ENCODE measurements at regions of chr1 and their contacts with region 1.

Region 1: GRCh38 chr1:39196244-39197215 is 8.0 kb upstream of the MACF1 start:
- DNase-seq: peak; percentile 31 to 94 (median 61)
- ATAC-seq: peak; percentile 66
- H3K4me3 ChIP-seq: peak overlapping the region; percentile 2
- H3K4me3 Mint-ChIP-seq: peak overlapping the region; percentile 77
- H3K27ac ChIP-seq: peak overlapping the region; percentile 81 to 85
- H3K27ac Mint-ChIP-seq: peak overlapping the region; percentile 93
- H3K4me1 ChIP-seq: peaks cover 68% of the 10 kb centered on the region
- H3K4me1 Mint-ChIP-seq: peaks cover 82% of the 10 kb centered on the region
- H3K27me3 ChIP-seq: no peaks in the 10 kb centered on the region
- H3K27me3 Mint-ChIP-seq: no peaks in the 10 kb centered on the region
- CTCF ChIP-seq: no peak

Region 2: GRCh38 chr1:38789498-38790169 is 406.9 kb before region 1 on chr1:
- CTCF ChIA-PET with region 1: no interaction called
- POLR2A ChIA-PET with region 1: no interaction called
- intact Hi-C with region 1: no loop called
- DNase-seq: no peak
- ATAC-seq: no peak
- H3K4me3 ChIP-seq: no peak overlapping the region
- H3K4me3 Mint-ChIP-seq: no peak overlapping the region
- H3K27ac ChIP-seq: no peak overlapping the region
- H3K27ac Mint-ChIP-seq: no peak overlapping the region
- H3K4me1 ChIP-seq: no peaks in the 10 kb centered on the region
- H3K4me1 Mint-ChIP-seq: no peaks in the 10 kb centered on the region
- H3K27me3 ChIP-seq: peaks cover 32 to 51% of the 10 kb centered on the region in 2 experiments
- H3K27me3 Mint-ChIP-seq: peaks cover 92% of the 10 kb centered on the region
- CTCF ChIP-seq: no peak

Region 3: DNA sequence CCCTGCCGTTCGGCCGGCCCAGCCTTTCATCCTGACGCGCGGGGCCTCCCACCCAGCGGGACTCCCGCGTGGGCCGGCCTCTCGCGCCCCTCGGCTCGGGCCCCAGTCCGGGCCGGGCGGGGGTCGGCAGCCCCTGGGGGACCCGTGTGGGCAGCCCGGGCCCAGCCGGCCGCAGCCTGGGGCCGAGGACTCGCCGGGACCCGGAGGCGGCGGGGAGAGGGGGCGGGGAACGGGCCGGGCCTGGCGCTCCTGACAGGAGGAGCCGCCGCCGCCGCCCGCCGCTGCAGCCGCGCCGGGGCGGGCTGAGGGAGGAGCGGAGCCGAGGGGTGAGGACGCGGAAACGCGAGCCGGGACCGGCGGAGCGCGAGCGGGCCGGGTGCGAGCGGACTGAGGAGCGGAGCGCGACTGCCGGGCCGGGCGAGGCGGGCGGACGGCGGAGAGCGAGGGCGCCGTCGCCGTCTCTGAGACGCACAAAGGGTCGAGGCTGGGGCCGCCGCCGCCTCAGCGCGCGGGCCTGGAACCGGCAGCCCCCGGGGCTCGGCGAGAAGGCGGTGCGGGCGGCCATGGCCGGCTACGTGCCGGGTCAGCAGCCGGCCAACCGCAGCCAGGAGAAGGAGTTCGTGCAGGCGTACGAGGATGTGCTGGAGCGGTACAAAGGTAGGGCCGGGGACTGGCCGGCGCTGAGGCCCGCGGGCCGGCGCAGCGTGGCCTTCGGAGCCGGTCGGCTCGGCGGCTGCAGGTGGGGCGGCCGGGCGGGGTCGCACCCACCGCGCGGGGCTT is 91.3 kb before region 1 on chr1:
- CTCF ChIA-PET with region 1: interaction called, 14 read pairs
- POLR2A ChIA-PET with region 1: interaction called, 4 read pairs
- intact Hi-C with region 1: loop called (anchors 1 to 2 kb)
- DNase-seq: peak; percentile 31 to 81 (median 60)
- ATAC-seq: peak; percentile 84
- H3K4me3 ChIP-seq: peak overlapping the region; percentile 70
- H3K4me3 Mint-ChIP-seq: peak overlapping the region; percentile 72
- H3K27ac ChIP-seq: no peak overlapping the region
- H3K27ac Mint-ChIP-seq: no peak overlapping the region
- H3K4me1 ChIP-seq: peaks cover 19% of the 10 kb centered on the region
- H3K4me1 Mint-ChIP-seq: peaks cover 35% of the 10 kb centered on the region
- H3K27me3 ChIP-seq: no peaks in the 10 kb centered on the region
- H3K27me3 Mint-ChIP-seq: no peaks in the 10 kb centered on the region
- CTCF ChIP-seq: no peak

Region 4: GRCh38 chr1:39220891-39221870 is 24.7 kb after region 1 on chr1:
- CTCF ChIA-PET with region 1: interaction called, 42 read pairs
- POLR2A ChIA-PET with region 1: interaction called, 47 read pairs
- intact Hi-C with region 1: no loop called
- DNase-seq: no peak
- ATAC-seq: no peak
- H3K4me3 ChIP-seq: no peak overlapping the region
- H3K4me3 Mint-ChIP-seq: peak overlapping the region; percentile 3
- H3K27ac ChIP-seq: no peak overlapping the region
- H3K27ac Mint-ChIP-seq: peak overlapping the region; percentile 45
- H3K4me1 ChIP-seq: peaks cover 70% of the 10 kb centered on the region
- H3K4me1 Mint-ChIP-seq: peaks cover 77% of the 10 kb centered on the region
- H3K27me3 ChIP-seq: no peaks in the 10 kb centered on the region
- H3K27me3 Mint-ChIP-seq: no peaks in the 10 kb centered on the region
- CTCF ChIP-seq: no peak

Region 5: GRCh38 chr1:39238476-39238875 is 41.9 kb after region 1 on chr1:
- CTCF ChIA-PET with region 1: interaction called, 30 read pairs
- POLR2A ChIA-PET with region 1: interaction called, 11 read pairs
- intact Hi-C with region 1: no loop called
- DNase-seq: no peak
- ATAC-seq: no peak
- H3K4me3 ChIP-seq: no peak overlapping the region
- H3K4me3 Mint-ChIP-seq: no peak overlapping the region
- H3K27ac ChIP-seq: no peak overlapping the region
- H3K27ac Mint-ChIP-seq: peak overlapping the region; percentile 75
- H3K4me1 ChIP-seq: peaks cover 22% of the 10 kb centered on the region
- H3K4me1 Mint-ChIP-seq: peaks cover 54% of the 10 kb centered on the region
- H3K27me3 ChIP-seq: no peaks in the 10 kb centered on the region
- H3K27me3 Mint-ChIP-seq: no peaks in the 10 kb centered on the region
- CTCF ChIP-seq: no peak

Region 6: DNA sequence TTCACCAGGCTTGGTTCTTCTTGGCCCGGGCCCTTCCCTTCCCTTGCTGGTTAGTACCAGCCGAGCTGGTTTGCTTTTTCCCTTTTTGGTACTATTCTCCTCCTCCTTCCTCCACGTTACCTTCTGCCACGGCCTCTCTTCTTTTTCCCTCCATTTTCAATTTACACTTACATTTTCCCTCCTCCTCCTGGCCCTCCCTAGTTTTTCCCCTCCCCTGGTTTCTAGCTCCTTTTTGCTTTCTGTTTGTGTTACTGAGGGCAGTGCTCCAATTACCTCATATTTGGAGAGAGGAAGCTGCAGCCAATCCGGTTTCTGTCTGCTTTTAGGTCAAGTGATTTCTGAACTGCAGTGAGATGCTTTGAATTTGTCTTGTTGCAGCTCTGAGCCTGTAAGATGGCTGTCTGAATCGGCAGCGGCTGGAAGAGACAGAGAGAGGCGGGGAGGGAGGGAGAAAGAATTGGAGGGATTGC is 71.6 kb after region 1 on chr1:
- CTCF ChIA-PET with region 1: interaction called, 376 read pairs
- POLR2A ChIA-PET with region 1: interaction called, 13 read pairs
- intact Hi-C with region 1: no loop called
- DNase-seq: peak in 3 of 14 experiments; percentile 50 to 51 (median 51)
- ATAC-seq: peak; percentile 72
- H3K4me3 ChIP-seq: peak overlapping the region; percentile 2
- H3K4me3 Mint-ChIP-seq: peak overlapping the region; percentile 50
- H3K27ac ChIP-seq: no peak overlapping the region
- H3K27ac Mint-ChIP-seq: peak overlapping the region; percentile 67
- H3K4me1 ChIP-seq: peaks cover 40% of the 10 kb centered on the region
- H3K4me1 Mint-ChIP-seq: peaks cover 89% of the 10 kb centered on the region
- H3K27me3 ChIP-seq: no peaks in the 10 kb centered on the region
- H3K27me3 Mint-ChIP-seq: no peaks in the 10 kb centered on the region
- CTCF ChIP-seq: no peak

Region 7: DNA sequence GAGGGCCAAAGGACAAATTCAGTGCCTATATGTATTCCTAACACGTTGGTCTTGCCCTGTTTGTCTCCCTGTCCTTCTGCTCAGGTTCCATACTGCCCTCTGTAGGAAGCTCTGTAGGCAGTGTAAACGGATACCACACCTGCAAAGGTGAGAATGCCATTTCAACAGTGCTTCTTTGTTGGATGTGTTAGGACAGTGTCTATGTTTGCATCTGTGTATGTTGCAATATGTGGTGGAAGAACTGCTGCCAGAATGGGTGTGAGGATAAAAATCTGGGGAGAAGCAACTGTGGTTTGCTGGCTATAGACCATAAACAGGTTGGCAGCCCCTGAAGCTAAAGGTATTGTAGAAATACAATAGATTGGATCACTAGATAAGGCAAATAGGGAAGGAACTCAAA is 181.8 kb after region 1 on chr1:
- CTCF ChIA-PET with region 1: no interaction called
- POLR2A ChIA-PET with region 1: no interaction called
- intact Hi-C with region 1: no loop called
- DNase-seq: peak in 4 of 14 experiments; percentile 9 to 34 (median 30)
- ATAC-seq: no peak
- H3K4me3 ChIP-seq: no peak overlapping the region
- H3K4me3 Mint-ChIP-seq: no peak overlapping the region
- H3K27ac ChIP-seq: no peak overlapping the region
- H3K27ac Mint-ChIP-seq: peak overlapping the region; percentile 27
- H3K4me1 ChIP-seq: no peaks in the 10 kb centered on the region
- H3K4me1 Mint-ChIP-seq: no peaks in the 10 kb centered on the region
- H3K27me3 ChIP-seq: no peaks in the 10 kb centered on the region
- H3K27me3 Mint-ChIP-seq: no peaks in the 10 kb centered on the region
- CTCF ChIP-seq: peak; percentile 42

Measured in CD4-positive, alpha-beta T cell (primary cell).